CD8-positive, alpha-beta T cell (primary cell): ENCODE measurements at regions of chr20 and their contacts with region 1.

Region 1: GRCh38 chr20:16491294-16491914 is 81.8 kb downstream of the KIF16B start:
- DNase-seq: no peak
- ATAC-seq: no peak
- H3K4me3 ChIP-seq: no peak overlapping the region
- H3K4me3 Mint-ChIP-seq: no peak overlapping the region
- H3K27ac ChIP-seq: no peak overlapping the region
- H3K27ac Mint-ChIP-seq: no peak overlapping the region
- H3K4me1 ChIP-seq: no peaks in the 10 kb centered on the region
- H3K4me1 Mint-ChIP-seq: no peaks in the 10 kb centered on the region
- H3K27me3 ChIP-seq: no peaks in the 10 kb centered on the region
- H3K27me3 Mint-ChIP-seq: no peaks in the 10 kb centered on the region
- CTCF ChIP-seq: no peak

Region 2: GRCh38 chr20:16459019-16459700 is 32.2 kb before region 1 on chr20:
- CTCF ChIA-PET with region 1: no interaction called
- POLR2A ChIA-PET with region 1: no interaction called
- intact Hi-C with region 1: loop called in 1 of 2 experiments (anchors 1 kb)
- DNase-seq: no peak
- ATAC-seq: no peak
- H3K4me3 ChIP-seq: no peak overlapping the region
- H3K4me3 Mint-ChIP-seq: no peak overlapping the region
- H3K27ac ChIP-seq: no peak overlapping the region
- H3K27ac Mint-ChIP-seq: no peak overlapping the region
- H3K4me1 ChIP-seq: no peaks in the 10 kb centered on the region
- H3K4me1 Mint-ChIP-seq: no peaks in the 10 kb centered on the region
- H3K27me3 ChIP-seq: no peaks in the 10 kb centered on the region
- H3K27me3 Mint-ChIP-seq: no peaks in the 10 kb centered on the region
- CTCF ChIP-seq: no peak

Region 3: DNA sequence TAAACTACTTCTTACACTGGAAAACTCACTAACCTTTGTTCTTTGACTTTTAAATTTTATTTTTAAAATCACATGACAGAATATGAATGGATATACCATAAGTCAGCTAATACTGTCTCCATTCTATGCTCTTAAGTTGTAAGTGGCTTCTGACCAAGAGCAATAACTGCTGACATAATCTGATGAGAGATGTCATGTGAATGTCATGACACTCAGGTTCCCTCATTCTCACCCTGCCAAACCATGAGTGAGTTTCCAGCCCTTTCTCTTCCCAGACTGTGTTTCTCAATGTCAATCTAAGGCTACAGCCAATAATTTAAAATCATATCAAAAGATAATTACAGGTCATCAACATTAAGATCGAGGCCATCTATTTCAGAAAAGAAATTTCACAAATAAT is 42.1 kb after region 1 on chr20:
- CTCF ChIA-PET with region 1: no interaction called
- POLR2A ChIA-PET with region 1: no interaction called
- intact Hi-C with region 1: loop called in 1 of 2 experiments (anchors 1 kb)
- DNase-seq: no peak
- ATAC-seq: no peak
- H3K4me3 ChIP-seq: no peak overlapping the region
- H3K4me3 Mint-ChIP-seq: no peak overlapping the region
- H3K27ac ChIP-seq: no peak overlapping the region
- H3K27ac Mint-ChIP-seq: no peak overlapping the region
- H3K4me1 ChIP-seq: no peaks in the 10 kb centered on the region
- H3K4me1 Mint-ChIP-seq: no peaks in the 10 kb centered on the region
- H3K27me3 ChIP-seq: no peaks in the 10 kb centered on the region
- H3K27me3 Mint-ChIP-seq: no peaks in the 10 kb centered on the region
- CTCF ChIP-seq: no peak

Region 4: GRCh38 chr20:16566080-16566479 is 74.7 kb after region 1 on chr20:
- CTCF ChIA-PET with region 1: no interaction called
- POLR2A ChIA-PET with region 1: no interaction called
- intact Hi-C with region 1: no loop called
- DNase-seq: no peak
- ATAC-seq: no peak
- H3K4me3 ChIP-seq: no peak overlapping the region
- H3K4me3 Mint-ChIP-seq: no peak overlapping the region
- H3K27ac ChIP-seq: no peak overlapping the region
- H3K27ac Mint-ChIP-seq: no peak overlapping the region
- H3K4me1 ChIP-seq: no peaks in the 10 kb centered on the region
- H3K4me1 Mint-ChIP-seq: peaks cover 11% of the 10 kb centered on the region
- H3K27me3 ChIP-seq: no peaks in the 10 kb centered on the region
- H3K27me3 Mint-ChIP-seq: no peaks in the 10 kb centered on the region
- CTCF ChIP-seq: no peak

Region 5: DNA sequence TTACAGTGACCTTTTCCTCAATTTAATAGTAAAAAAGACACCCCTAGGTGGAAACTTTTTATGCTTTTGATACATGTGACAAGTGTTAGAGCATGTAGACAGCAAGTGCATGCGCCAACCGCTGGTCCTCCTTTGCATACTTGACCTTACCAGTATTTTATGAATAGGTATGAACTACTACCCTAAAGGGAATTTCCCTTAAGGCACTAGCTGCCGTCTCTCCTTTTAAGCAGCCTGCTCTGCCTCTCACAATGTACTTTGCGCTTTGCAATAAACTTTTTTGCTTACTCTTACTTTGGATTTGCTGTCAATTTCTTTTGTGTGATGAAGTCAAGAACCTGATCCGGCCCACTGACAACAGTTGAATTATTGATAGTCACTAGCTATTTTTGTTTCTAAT is 1746.3 kb after region 1 on chr20:
- CTCF ChIA-PET with region 1: no interaction called
- POLR2A ChIA-PET with region 1: no interaction called
- intact Hi-C with region 1: no loop called
- DNase-seq: no peak
- ATAC-seq: no peak
- H3K4me3 ChIP-seq: no peak overlapping the region
- H3K4me3 Mint-ChIP-seq: no peak overlapping the region
- H3K27ac ChIP-seq: no peak overlapping the region
- H3K27ac Mint-ChIP-seq: no peak overlapping the region
- H3K4me1 ChIP-seq: no peaks in the 10 kb centered on the region
- H3K4me1 Mint-ChIP-seq: no peaks in the 10 kb centered on the region
- H3K27me3 ChIP-seq: no peaks in the 10 kb centered on the region
- H3K27me3 Mint-ChIP-seq: peaks cover 30% of the 10 kb centered on the region
- CTCF ChIP-seq: no peak